CD4-positive, alpha-beta memory T cell (primary cell): ENCODE measurements at regions of chr6 and their contacts with region 1.

Region 1: DNA sequence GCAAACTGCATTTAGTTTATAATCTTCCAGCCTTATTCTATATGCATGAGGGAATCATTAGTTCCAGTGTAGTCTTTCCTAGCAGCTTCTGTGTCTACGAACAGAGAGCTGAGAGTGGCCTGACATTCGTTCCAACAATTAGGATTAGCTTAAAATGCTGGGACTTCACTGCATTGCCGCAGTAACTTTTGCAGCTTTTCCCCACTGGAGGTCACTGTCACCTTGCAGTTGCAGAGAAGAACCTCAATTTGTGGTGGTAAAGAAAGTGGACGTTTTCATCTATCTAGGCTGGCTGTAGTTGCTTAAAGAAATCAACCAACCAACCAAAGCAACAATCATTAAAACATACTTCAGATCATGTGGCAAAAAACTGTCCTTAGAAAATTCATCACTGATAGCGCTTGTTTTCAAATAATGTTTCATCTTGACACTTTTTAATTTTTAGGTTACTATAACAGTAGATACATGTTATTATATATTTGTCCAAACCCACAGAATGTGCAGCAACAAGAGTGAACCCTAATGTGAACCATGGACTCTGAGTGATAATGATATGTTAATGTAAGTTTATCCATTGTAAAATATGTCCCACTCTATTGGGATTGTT is 12.2 kb downstream of the MYLK4 start:
- DNase-seq: peak; percentile 41 to 65 (median 47)
- H3K4me3 ChIP-seq: no peak overlapping the region
- H3K4me3 Mint-ChIP-seq: no peak overlapping the region
- H3K27ac ChIP-seq: no peak overlapping the region
- H3K27ac Mint-ChIP-seq: no peak overlapping the region
- H3K4me1 ChIP-seq: no peaks in the 10 kb centered on the region
- H3K4me1 Mint-ChIP-seq: no peaks in the 10 kb centered on the region
- H3K27me3 ChIP-seq: no peaks in the 10 kb centered on the region
- H3K27me3 Mint-ChIP-seq: peaks cover 1 to 9% of the 10 kb centered on the region in 2 donors

Region 2: DNA sequence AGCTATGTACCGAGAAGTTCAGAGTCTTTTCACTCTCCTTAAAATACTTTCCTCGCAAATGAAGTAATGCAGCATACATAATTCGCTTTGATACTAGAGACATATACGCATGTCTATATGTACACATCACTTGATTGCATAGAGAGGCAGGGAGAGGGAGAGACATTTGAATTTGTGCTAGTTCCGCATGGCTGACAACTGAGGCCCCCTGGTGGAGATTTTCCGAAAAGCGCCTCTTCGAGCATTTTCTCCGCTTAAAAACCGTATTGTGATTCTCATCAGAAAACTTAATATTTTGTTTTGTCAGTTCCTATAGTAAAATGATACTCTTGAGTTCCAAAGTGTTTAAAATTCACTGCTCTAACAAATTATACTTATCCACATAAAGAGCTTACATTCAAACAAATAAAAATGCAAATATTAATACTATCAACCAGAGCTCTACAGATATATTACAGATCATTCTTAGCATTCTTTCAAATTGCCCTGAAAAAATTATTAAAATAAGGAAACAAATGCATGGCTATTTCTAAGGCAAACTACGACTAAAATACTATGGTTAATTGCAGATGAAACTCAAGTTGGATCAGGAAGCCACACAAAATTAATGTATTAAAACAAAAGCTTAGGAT is 11.6 kb after region 1 on chr6:
- CTCF ChIA-PET with region 1: interaction called, 83 read pairs
- POLR2A ChIA-PET with region 1: no interaction called
- intact Hi-C with region 1: loop called (anchors 1 kb)
- DNase-seq: peak; percentile 52 to 63 (median 56)
- H3K4me3 ChIP-seq: no peak overlapping the region
- H3K4me3 Mint-ChIP-seq: no peak overlapping the region
- H3K27ac ChIP-seq: no peak overlapping the region
- H3K27ac Mint-ChIP-seq: peak overlapping the region in 1 of 7 donors; percentile 35
- H3K4me1 ChIP-seq: no peaks in the 10 kb centered on the region
- H3K4me1 Mint-ChIP-seq: peaks cover 0 to 2% (median under 1%) of the 10 kb centered on the region in 4 donors
- H3K27me3 ChIP-seq: peaks cover 7% of the 10 kb centered on the region
- H3K27me3 Mint-ChIP-seq: peaks cover 13 to 21% of the 10 kb centered on the region in 2 donors